Naive thymus-derived CD4-positive, alpha-beta T cell (primary cell): ENCODE measurements at regions of chr18 and their contacts with region 1.

Region 1: DNA sequence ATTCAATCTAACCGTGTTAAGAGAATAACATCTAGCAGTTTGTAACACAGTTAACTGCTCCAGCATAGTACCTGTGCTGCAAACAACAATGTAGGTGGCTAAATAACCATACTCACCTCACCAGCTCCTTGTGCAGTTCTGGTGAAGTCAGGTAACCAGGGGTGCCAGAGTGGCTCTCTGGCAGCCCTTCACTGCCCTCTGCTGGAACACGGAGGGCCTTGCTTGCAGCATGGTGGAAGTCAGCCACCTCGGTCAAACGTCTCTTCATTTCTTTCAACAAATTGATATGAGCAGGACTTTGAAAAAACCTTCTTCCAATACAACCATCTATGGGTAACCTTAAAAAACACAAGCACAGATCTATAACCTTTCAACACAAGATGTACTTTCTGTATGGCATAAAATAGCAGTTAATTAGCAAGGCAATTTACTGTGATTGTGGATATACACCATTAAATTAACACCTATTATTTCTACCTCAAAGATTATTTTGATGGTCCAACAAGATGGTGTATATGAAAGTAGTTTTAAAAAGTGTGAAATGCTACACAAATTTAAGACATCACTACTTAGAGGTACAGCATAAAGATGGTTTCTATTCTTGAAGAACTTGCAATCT is 56.6 kb downstream of the EPG5 start:
- DNase-seq: peak; percentile 16 to 68 (median 57)
- ATAC-seq: peak; percentile 83
- H3K4me3 ChIP-seq: no peak overlapping the region
- H3K4me3 Mint-ChIP-seq: no peak overlapping the region
- H3K27ac ChIP-seq: no peak overlapping the region
- H3K27ac Mint-ChIP-seq: no peak overlapping the region
- H3K4me1 ChIP-seq: no peaks in the 10 kb centered on the region
- H3K4me1 Mint-ChIP-seq: peaks cover 0 to 5% (median 2%) of the 10 kb centered on the region in 7 donors
- H3K27me3 ChIP-seq: no peaks in the 10 kb centered on the region
- H3K27me3 Mint-ChIP-seq: no peaks in the 10 kb centered on the region

Region 2: GRCh38 chr18:45621061-45621511 is 289.4 kb before region 1 on chr18:
- CTCF ChIA-PET with region 1: interaction called, 3 read pairs
- POLR2A ChIA-PET with region 1: no interaction called
- intact Hi-C with region 1: loop called (anchors 1 kb)
- DNase-seq: peak in 8 of 9 donors; percentile 8 to 61 (median 40)
- ATAC-seq: peak; percentile 76
- H3K4me3 ChIP-seq: no peak overlapping the region
- H3K4me3 Mint-ChIP-seq: no peak overlapping the region
- H3K27ac ChIP-seq: no peak overlapping the region
- H3K27ac Mint-ChIP-seq: no peak overlapping the region
- H3K4me1 ChIP-seq: no peaks in the 10 kb centered on the region
- H3K4me1 Mint-ChIP-seq: no peaks in the 10 kb centered on the region
- H3K27me3 ChIP-seq: no peaks in the 10 kb centered on the region
- H3K27me3 Mint-ChIP-seq: peaks cover 0 to 27% (median 10%) of the 10 kb centered on the region in 5 donors

Region 3: GRCh38 chr18:45722899-45723298 is 187.6 kb before region 1 on chr18:
- CTCF ChIA-PET with region 1: interaction called, 3 read pairs
- POLR2A ChIA-PET with region 1: no interaction called
- intact Hi-C with region 1: loop called in 1 of 2 experiments (anchors 2 kb)
- DNase-seq: peak in 8 of 9 donors; percentile 7 to 74 (median 40)
- ATAC-seq: peak; percentile 90
- H3K4me3 ChIP-seq: no peak overlapping the region
- H3K4me3 Mint-ChIP-seq: no peak overlapping the region
- H3K27ac ChIP-seq: no peak overlapping the region
- H3K27ac Mint-ChIP-seq: no peak overlapping the region
- H3K4me1 ChIP-seq: no peaks in the 10 kb centered on the region
- H3K4me1 Mint-ChIP-seq: peaks cover 0 to 15% (median 0%) of the 10 kb centered on the region in 7 donors
- H3K27me3 ChIP-seq: no peaks in the 10 kb centered on the region
- H3K27me3 Mint-ChIP-seq: peaks cover 0 to 35% (median 0%) of the 10 kb centered on the region in 5 donors

Region 4: DNA sequence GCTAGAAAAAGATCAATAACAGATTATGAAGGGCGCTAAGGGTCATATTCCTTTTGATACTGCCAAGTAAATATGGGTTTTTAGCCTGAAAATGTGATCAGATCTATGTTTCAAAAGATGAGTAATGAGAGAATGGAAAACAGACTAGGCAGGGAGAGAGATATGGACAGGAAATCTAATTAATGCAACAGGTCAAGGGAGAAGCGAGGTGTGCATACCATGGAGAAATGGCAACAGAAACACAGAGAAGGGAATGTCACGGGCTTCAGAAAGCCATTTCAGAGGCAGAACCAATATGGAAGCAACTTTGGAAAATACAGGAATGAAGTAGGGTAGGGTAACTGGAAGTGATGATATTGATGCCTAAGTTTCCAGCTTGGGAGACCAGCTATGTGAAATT is 15.7 kb before region 1 on chr18:
- CTCF ChIA-PET with region 1: no interaction called
- POLR2A ChIA-PET with region 1: no interaction called
- intact Hi-C with region 1: loop called in 1 of 2 experiments (anchors 2 kb)
- DNase-seq: no peak
- ATAC-seq: no peak
- H3K4me3 ChIP-seq: no peak overlapping the region
- H3K4me3 Mint-ChIP-seq: no peak overlapping the region
- H3K27ac ChIP-seq: no peak overlapping the region
- H3K27ac Mint-ChIP-seq: peak overlapping the region in 3 of 9 donors; percentile 9 to 14 (median 13)
- H3K4me1 ChIP-seq: no peaks in the 10 kb centered on the region
- H3K4me1 Mint-ChIP-seq: peaks cover 0 to 5% (median 0%) of the 10 kb centered on the region in 7 donors
- H3K27me3 ChIP-seq: no peaks in the 10 kb centered on the region
- H3K27me3 Mint-ChIP-seq: no peaks in the 10 kb centered on the region